Sciatic nerve (tissue), 2 donors: ENCODE measurements at regions of chr3 and their contacts with region 1.

Region 1: GRCh38 chr3:46705022-46705530 is 3.9 kb downstream of the TMIE start:
- DNase-seq: peak; percentile 84
- ATAC-seq: peak; percentile 86

Region 2: DNA sequence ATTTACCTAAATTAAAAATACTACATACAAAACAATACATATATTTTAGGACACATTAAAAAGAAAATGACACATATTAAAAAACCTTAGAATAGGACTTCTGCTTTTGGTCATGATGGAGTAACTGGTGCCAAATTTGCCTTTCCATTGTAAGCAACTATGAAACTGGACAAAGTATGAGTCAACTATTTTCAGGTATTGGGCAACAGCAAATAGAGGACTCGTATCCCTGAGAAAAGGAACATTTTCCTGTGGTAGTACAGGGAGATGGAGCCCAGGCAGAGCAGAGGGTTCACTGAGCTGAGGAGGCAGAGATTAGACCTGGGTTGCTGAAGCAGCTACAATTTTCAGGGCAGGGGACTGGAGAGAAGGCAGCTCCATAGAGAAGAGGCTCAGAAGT is 511.6 kb before region 1 on chr3:
- intact Hi-C with region 1: no loop called
- DNase-seq: no peak
- ATAC-seq: peak; percentile 39

Region 3: DNA sequence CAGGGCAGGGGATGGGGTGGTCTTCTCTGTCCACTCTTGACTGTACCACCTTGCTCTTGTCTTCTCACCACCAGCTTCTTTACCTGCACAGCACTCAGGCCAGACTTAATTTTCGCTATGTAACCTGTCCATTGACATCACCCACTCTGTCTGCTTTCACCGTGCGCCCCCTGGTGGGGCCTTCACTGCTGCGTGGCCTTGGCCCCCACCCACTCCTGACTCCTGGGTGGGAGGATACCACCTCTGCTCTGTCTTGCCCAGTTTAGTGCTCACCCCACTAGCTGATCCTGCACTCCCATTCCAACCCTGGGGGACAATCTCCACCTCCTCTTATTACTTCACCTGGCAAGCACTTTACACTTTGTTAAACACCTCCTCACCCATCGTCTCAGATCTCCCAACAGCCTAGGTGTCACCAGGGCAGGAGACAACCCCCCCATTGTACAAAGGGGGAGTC is 190.2 kb after region 1 on chr3:
- intact Hi-C with region 1: loop called (anchors 5 kb)
- DNase-seq: peak; percentile 86
- ATAC-seq: peak; percentile 63

Region 4: GRCh38 chr3:46909535-46910442 is 204.7 kb after region 1 on chr3:
- intact Hi-C with region 1: loop called (anchors 5 kb)
- DNase-seq: peak; percentile 92
- ATAC-seq: peak; percentile 84